ENCODE measurements at regions of chr4 and their contacts with region 1.

Region 1: GRCh38 chr4:88211473-88212252 is 53.2 kb upstream of the ABCG2 start:
- DNase-seq: peak; percentile 46
- ATAC-seq: peak; percentile 70
- H3K4me3 ChIP-seq: no peak overlapping the region
- H3K27ac ChIP-seq: no peak overlapping the region
- H3K4me1 ChIP-seq: no peaks in the 10 kb centered on the region
- H3K27me3 ChIP-seq: peaks cover 11% of the 10 kb centered on the region
- CTCF ChIP-seq: peak; percentile 88
- POLR2A ChIP-seq: peak; percentile 44; the same call in 1 of the 2 replicates
- RAD21 ChIP-seq: peak; percentile 96

Region 2: GRCh38 chr4:87543835-87544461 is 667.7 kb before region 1 on chr4:
- CTCF ChIA-PET with region 1: no interaction called
- POLR2A ChIA-PET with region 1: no interaction called
- dilution Hi-C with region 1: no loop called
- in situ Hi-C with region 1: no loop called
- intact Hi-C with region 1: loop called (anchors 5 kb)
- DNase-seq: peak; percentile 52
- ATAC-seq: peak; percentile 90
- H3K4me3 ChIP-seq: no peak overlapping the region
- H3K27ac ChIP-seq: no peak overlapping the region
- H3K4me1 ChIP-seq: no peaks in the 10 kb centered on the region
- H3K27me3 ChIP-seq: peaks cover 7% of the 10 kb centered on the region
- CTCF ChIP-seq: peak; percentile 50
- POLR2A ChIP-seq: no peak
- RAD21 ChIP-seq: peak; percentile 46

Region 3: GRCh38 chr4:87679449-87680169 is 532.1 kb before region 1 on chr4:
- CTCF ChIA-PET with region 1: no interaction called
- POLR2A ChIA-PET with region 1: no interaction called
- dilution Hi-C with region 1: no loop called
- in situ Hi-C with region 1: loop called (anchors 10 kb)
- intact Hi-C with region 1: loop called (anchors 1 kb)
- DNase-seq: peak; percentile 58
- ATAC-seq: peak; percentile 77
- H3K4me3 ChIP-seq: no peak overlapping the region
- H3K27ac ChIP-seq: no peak overlapping the region
- H3K4me1 ChIP-seq: no peaks in the 10 kb centered on the region
- H3K27me3 ChIP-seq: no peaks in the 10 kb centered on the region
- CTCF ChIP-seq: peak; percentile 81
- POLR2A ChIP-seq: no peak
- RAD21 ChIP-seq: peak; percentile 83

Region 4: GRCh38 chr4:87856816-87857215 is 354.8 kb before region 1 on chr4:
- CTCF ChIA-PET with region 1: interaction called, 4 read pairs
- POLR2A ChIA-PET with region 1: no interaction called
- dilution Hi-C with region 1: no loop called
- in situ Hi-C with region 1: loop called (anchors 5 kb)
- intact Hi-C with region 1: loop called (anchors 1 kb)
- DNase-seq: no peak
- ATAC-seq: no peak
- H3K4me3 ChIP-seq: no peak overlapping the region
- H3K27ac ChIP-seq: no peak overlapping the region
- H3K4me1 ChIP-seq: no peaks in the 10 kb centered on the region
- H3K27me3 ChIP-seq: peaks cover 6% of the 10 kb centered on the region
- CTCF ChIP-seq: no peak
- POLR2A ChIP-seq: no peak
- RAD21 ChIP-seq: no peak

Region 5: DNA sequence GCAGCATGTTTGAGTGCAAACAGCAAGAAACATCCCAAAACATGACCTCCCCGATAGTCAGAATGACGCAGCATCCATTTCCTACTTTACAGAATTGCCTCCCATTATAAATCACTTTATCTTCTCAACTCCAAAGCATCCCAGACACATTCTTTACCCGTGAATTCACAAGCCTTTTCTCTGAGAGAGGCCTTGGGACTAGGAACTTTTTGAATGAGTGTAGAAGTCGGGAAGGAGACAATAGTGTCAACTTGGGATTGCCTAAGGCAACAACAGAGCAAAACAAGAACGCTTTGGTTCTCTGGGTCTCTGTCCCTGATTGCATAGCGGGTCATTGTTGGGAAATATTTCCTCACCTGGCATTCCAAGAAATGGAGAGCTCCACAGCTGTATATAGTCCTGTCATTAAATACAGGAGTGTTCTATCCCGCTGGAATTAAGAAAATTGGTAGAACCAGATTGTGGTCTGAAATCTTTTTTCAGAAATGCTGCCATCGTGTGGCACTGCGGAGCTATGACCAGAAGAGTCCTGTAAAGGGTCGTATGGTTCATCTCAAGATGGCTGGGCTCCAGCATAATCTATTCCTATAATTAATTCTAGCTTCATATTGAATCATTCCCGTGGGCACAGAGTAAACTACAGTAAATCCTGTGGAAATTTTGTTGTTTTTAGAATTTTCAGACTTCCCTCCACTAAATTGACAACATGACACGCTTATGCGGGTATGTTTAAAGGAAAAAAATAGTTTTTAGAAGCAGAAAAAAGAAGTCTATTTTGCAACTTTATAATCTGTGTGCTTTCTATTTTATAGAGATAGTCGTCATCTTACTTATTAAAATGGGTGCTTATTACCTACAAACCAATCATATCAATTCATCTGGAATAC is 238.1 kb before region 1 on chr4:
- CTCF ChIA-PET with region 1: interaction called, 6 read pairs
- POLR2A ChIA-PET with region 1: no interaction called
- dilution Hi-C with region 1: no loop called
- in situ Hi-C with region 1: no loop called
- intact Hi-C with region 1: loop called (anchors 5 kb)
- DNase-seq: peak; percentile 84
- ATAC-seq: peak; percentile 90
- H3K4me3 ChIP-seq: peak overlapping the region; percentile 34; the same call in 1 of the 2 replicates
- H3K27ac ChIP-seq: no peak overlapping the region
- H3K4me1 ChIP-seq: no peaks in the 10 kb centered on the region
- H3K27me3 ChIP-seq: peaks cover 5% of the 10 kb centered on the region
- CTCF ChIP-seq: peak; percentile 65
- POLR2A ChIP-seq: no peak
- RAD21 ChIP-seq: peak; percentile 45

Region 6: DNA sequence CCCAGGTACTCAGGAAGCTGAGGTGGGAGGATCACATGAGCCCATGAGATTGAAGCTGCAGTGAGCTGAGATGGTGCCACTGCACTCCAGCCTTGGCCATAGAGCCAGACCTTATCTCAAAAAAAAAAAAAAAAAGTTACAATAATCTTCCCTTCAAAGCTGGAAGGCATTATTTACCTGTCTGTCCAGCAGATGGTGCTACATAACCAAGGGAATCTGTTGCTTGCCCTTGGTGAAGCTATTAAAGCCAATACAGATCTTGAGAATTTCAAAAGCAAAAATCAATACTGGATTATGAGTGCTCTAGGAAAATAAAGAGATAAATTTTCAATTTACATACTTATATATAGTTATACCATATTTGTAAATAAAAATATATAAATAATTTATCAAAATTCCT is 178.4 kb before region 1 on chr4:
- CTCF ChIA-PET with region 1: interaction called, 11 read pairs
- POLR2A ChIA-PET with region 1: no interaction called
- dilution Hi-C with region 1: no loop called
- in situ Hi-C with region 1: loop called (anchors 5 kb)
- intact Hi-C with region 1: loop called (anchors 1 kb)
- DNase-seq: peak; percentile 72
- ATAC-seq: peak; percentile 78
- H3K4me3 ChIP-seq: no peak overlapping the region
- H3K27ac ChIP-seq: no peak overlapping the region
- H3K4me1 ChIP-seq: peaks cover 8% of the 10 kb centered on the region
- H3K27me3 ChIP-seq: no peaks in the 10 kb centered on the region
- CTCF ChIP-seq: peak; percentile 74
- POLR2A ChIP-seq: no peak
- RAD21 ChIP-seq: peak; percentile 80

Region 7: GRCh38 chr4:88054901-88055300 is 156.8 kb before region 1 on chr4:
- CTCF ChIA-PET with region 1: interaction called, 24 read pairs
- POLR2A ChIA-PET with region 1: no interaction called
- dilution Hi-C with region 1: no loop called
- in situ Hi-C with region 1: no loop called
- intact Hi-C with region 1: loop called (anchors 1 kb)
- DNase-seq: peak; percentile 72
- ATAC-seq: peak; percentile 99
- H3K4me3 ChIP-seq: no peak overlapping the region
- H3K27ac ChIP-seq: no peak overlapping the region
- H3K4me1 ChIP-seq: no peaks in the 10 kb centered on the region
- H3K27me3 ChIP-seq: no peaks in the 10 kb centered on the region
- CTCF ChIP-seq: peak; percentile 64
- POLR2A ChIP-seq: no peak
- RAD21 ChIP-seq: peak; percentile 81